ENCODE measurements at regions of chr4 and their contacts with region 1.

Region 1: GRCh38 chr4:69881173-69881773 is 21.3 kb upstream of the SULT1E1 start:
- DNase-seq: peak in 1 of 2 donors; percentile 28
- H3K4me3 ChIP-seq: no peak overlapping the region
- H3K27ac ChIP-seq: no peak overlapping the region
- H3K4me1 ChIP-seq: no peaks in the 10 kb centered on the region
- H3K27me3 ChIP-seq: no peaks in the 10 kb centered on the region
- CTCF ChIP-seq: peak; percentile 49 to 57

Region 2: DNA sequence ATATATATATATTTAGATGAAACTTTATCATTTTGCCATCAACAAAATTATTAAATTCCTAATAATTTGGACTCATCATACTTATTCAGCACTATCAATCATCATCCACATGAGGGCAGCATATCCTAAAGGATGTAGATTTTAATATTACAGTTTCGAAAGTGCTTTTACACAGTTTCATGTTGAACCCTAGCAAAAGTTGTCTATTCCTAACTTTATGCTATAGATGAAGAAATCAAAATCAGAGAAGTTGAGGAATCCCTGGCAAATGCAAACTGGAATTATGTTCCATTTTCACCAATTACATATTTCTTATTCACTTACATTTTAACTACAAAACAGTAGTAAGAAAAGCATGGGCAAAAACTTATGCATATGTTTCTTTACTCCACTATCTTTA is 191.7 kb before region 1 on chr4:
- intact Hi-C with region 1: loop called (anchors 5 kb)
- DNase-seq: no peak
- H3K4me3 ChIP-seq: no peak overlapping the region
- H3K27ac ChIP-seq: no peak overlapping the region
- H3K4me1 ChIP-seq: no peaks in the 10 kb centered on the region
- H3K27me3 ChIP-seq: no peaks in the 10 kb centered on the region
- CTCF ChIP-seq: peak; percentile 40 to 43

Region 3: GRCh38 chr4:70062000-70062399 is 180.7 kb after region 1 on chr4:
- intact Hi-C with region 1: no loop called
- DNase-seq: no peak
- H3K4me3 ChIP-seq: no peak overlapping the region
- H3K27ac ChIP-seq: no peak overlapping the region
- H3K4me1 ChIP-seq: no peaks in the 10 kb centered on the region
- H3K27me3 ChIP-seq: no peaks in the 10 kb centered on the region
- CTCF ChIP-seq: no peak